IMR-90 (cell line): ENCODE measurements at regions of chr11 and their contacts with region 1.

Region 1: DNA sequence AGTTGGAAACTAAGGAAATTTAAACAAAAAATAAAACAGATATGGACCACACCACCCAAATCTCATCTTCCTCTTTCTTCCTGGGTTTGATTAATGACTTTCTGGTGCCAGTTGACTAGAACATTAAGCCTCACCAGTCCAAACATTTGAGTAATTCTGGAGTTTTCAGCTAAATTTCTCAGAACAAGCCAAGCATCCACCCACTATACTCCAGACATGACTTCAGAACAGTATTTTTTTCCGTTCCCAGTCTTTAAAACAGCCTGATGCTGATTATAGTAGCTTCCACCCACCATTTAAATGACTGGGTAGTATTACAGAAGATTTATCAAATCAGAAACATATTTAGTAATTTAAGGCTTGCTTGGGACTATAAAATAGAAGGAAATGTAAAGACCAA is 230.9 kb upstream of the UBASH3B start:
- DNase-seq: no peak
- ATAC-seq: no peak
- H3K4me3 ChIP-seq: no peak overlapping the region
- H3K27ac ChIP-seq: no peak overlapping the region
- H3K4me1 ChIP-seq: no peaks in the 10 kb centered on the region
- H3K27me3 ChIP-seq: peaks cover 6% of the 10 kb centered on the region; the same call in 1 of the 2 replicates
- CTCF ChIP-seq: no peak
- POLR2A ChIP-seq: no peak
- RAD21 ChIP-seq: no peak

Region 2: DNA sequence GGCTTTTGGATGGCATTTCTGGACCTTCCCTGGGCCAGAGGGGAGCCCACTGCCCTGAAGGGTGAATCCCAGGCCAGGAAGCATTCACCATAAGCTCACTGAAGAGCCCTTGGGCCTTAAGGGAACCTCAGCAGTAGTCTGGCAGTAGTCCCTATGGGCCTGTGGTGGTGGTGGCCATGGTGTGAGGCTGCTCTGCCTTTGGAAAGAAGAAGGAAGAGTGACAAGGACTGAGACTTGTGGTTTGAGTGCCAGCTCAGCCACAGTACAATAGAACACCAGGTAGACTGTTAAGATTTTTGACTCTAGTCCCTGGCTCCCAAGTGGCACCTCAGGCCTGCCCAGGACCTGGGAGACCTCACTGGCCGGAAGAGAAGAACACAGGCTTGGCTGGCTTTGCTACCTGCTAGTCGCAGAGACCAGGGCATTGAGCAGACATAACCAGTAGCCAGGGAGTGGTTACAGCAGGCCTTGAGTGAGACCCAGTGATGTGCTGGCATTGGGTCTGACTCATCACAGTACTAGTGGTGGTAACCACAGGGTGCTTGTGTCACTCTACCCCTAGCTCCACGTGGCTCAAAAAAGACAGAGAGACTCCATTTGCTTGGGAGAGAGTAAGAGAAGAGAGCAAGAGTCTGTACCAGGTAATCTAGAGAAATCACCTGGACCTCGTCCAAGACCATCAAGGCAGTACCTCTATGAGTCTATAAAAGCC is 48.8 kb before region 1 on chr11:
- CTCF ChIA-PET with region 1: no interaction called
- POLR2A ChIA-PET with region 1: no interaction called
- dilution Hi-C with region 1: no loop called
- in situ Hi-C with region 1: no loop called
- intact Hi-C with region 1: no loop called
- DNase-seq: peak; percentile 75
- ATAC-seq: peak; percentile 87
- H3K4me3 ChIP-seq: no peak overlapping the region
- H3K27ac ChIP-seq: no peak overlapping the region
- H3K4me1 ChIP-seq: no peaks in the 10 kb centered on the region; the same call in none of the 2 replicates
- H3K27me3 ChIP-seq: no peaks in the 10 kb centered on the region; the same call in 1 of the 2 replicates
- CTCF ChIP-seq: no peak
- POLR2A ChIP-seq: no peak
- RAD21 ChIP-seq: no peak

Region 3: GRCh38 chr11:122439911-122440810 is 15.5 kb after region 1 on chr11:
- CTCF ChIA-PET with region 1: interaction called, 3 read pairs
- POLR2A ChIA-PET with region 1: no interaction called
- dilution Hi-C with region 1: no loop called
- in situ Hi-C with region 1: no loop called
- intact Hi-C with region 1: loop called (anchors 1 kb)
- DNase-seq: peak; percentile 45
- ATAC-seq: peak; percentile 81
- H3K4me3 ChIP-seq: peak overlapping the region; percentile 44
- H3K27ac ChIP-seq: peak overlapping the region; percentile 83; the same call in 1 of the 2 replicates
- H3K4me1 ChIP-seq: peaks cover 5% of the 10 kb centered on the region; the same call in 1 of the 2 replicates
- H3K27me3 ChIP-seq: peaks cover 12% of the 10 kb centered on the region; the same call in 1 of the 2 replicates
- CTCF ChIP-seq: no peak
- POLR2A ChIP-seq: no peak
- RAD21 ChIP-seq: no peak

Region 4: GRCh38 chr11:122453586-122453985 is 28.9 kb after region 1 on chr11:
- CTCF ChIA-PET with region 1: no interaction called
- POLR2A ChIA-PET with region 1: no interaction called
- dilution Hi-C with region 1: no loop called
- in situ Hi-C with region 1: no loop called
- intact Hi-C with region 1: no loop called
- DNase-seq: no peak
- ATAC-seq: no peak
- H3K4me3 ChIP-seq: no peak overlapping the region
- H3K27ac ChIP-seq: no peak overlapping the region
- H3K4me1 ChIP-seq: no peaks in the 10 kb centered on the region
- H3K27me3 ChIP-seq: no peaks in the 10 kb centered on the region; the same call in none of the 2 replicates
- CTCF ChIP-seq: no peak
- POLR2A ChIP-seq: no peak
- RAD21 ChIP-seq: no peak

Region 5: DNA sequence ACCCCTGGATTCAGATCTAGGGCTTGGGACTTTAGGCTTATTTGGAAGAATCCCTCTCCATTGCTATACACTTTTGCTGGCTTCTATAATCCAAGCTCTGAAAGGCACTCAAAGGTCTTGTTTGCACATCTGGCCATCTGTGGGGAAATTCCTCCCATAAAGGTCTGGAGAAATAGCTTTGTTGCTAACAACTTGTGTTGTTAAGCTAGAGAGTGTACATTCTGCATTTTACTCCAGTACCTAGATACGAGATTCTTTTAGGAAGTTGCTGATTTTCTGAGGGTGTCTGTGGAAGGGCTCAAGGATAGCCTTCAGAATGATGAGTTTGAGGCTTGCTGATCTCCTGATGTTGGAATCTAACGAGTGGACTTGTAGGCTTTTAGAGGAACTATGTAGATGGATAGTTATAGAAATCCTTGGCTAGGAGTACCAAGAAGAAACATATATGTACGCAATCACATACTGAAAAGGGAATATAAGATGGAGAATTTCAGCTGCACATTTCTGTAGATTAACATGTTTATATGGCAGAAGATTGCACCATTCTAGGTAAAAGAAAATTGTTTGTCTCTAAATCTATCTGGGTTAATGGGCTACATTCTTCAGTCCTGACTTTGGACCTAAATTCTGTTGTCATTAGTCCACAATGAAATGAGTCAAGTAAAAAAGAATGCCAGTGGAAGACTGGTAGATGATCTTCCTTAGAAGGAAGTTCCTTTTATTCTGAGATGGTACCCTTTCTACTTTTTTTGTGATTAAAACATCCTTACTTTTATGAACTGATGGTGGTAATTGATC is 281.9 kb after region 1 on chr11:
- CTCF ChIA-PET with region 1: no interaction called
- POLR2A ChIA-PET with region 1: no interaction called
- dilution Hi-C with region 1: no loop called
- in situ Hi-C with region 1: no loop called
- intact Hi-C with region 1: no loop called
- DNase-seq: peak; percentile 87
- ATAC-seq: peak; percentile 67
- H3K4me3 ChIP-seq: no peak overlapping the region
- H3K27ac ChIP-seq: peak overlapping the region; percentile 88
- H3K4me1 ChIP-seq: peaks cover 31% of the 10 kb centered on the region
- H3K27me3 ChIP-seq: no peaks in the 10 kb centered on the region
- CTCF ChIP-seq: no peak
- POLR2A ChIP-seq: no peak
- RAD21 ChIP-seq: no peak

Region 6: DNA sequence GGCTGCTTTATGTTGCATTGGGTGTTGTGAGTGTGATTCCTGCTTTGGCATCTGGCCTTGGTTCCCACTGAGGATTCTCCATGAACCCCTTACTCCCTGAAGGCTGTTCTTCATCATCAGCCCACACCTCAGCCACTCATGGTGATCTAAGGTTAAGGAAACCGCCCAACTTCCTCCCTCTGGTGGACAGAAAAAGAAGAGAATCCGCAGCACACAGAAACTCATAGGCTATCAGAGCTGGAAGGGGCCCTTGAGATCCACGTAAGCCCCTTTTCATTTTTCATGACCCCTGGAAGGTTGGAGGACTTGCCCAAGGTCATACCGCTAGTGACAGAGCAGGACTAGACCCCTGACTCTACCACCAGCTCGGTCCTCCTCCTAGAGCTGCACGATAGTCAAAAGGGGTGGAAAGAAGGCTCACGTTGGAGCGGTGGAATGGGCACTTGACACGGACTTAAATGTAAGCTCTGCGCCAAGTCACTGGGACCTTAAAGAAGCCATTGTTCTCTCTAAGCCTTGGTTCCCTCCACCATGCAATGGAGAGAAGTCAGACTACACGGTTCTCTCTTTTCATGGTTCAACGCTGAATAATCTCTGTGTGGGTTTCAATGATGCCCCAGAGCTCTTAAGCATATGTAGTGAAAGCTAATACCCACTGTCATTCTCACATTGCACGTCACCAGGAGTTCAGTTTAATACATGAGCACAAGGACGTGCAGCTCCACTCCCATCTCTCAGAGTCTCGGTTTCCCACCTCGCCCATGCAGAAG is 330.1 kb after region 1 on chr11:
- CTCF ChIA-PET with region 1: no interaction called
- POLR2A ChIA-PET with region 1: no interaction called
- dilution Hi-C with region 1: no loop called
- in situ Hi-C with region 1: no loop called
- intact Hi-C with region 1: no loop called
- DNase-seq: no peak
- ATAC-seq: no peak
- H3K4me3 ChIP-seq: no peak overlapping the region
- H3K27ac ChIP-seq: no peak overlapping the region
- H3K4me1 ChIP-seq: no peaks in the 10 kb centered on the region; the same call in 1 of the 2 replicates
- H3K27me3 ChIP-seq: no peaks in the 10 kb centered on the region
- CTCF ChIP-seq: peak; percentile 20; the same call in 1 of the 2 replicates
- POLR2A ChIP-seq: no peak
- RAD21 ChIP-seq: peak; percentile 37